Colonic mucosa (tissue), 4 donors: ENCODE measurements at regions of chr4 and their contacts with region 1.

Region 1: DNA sequence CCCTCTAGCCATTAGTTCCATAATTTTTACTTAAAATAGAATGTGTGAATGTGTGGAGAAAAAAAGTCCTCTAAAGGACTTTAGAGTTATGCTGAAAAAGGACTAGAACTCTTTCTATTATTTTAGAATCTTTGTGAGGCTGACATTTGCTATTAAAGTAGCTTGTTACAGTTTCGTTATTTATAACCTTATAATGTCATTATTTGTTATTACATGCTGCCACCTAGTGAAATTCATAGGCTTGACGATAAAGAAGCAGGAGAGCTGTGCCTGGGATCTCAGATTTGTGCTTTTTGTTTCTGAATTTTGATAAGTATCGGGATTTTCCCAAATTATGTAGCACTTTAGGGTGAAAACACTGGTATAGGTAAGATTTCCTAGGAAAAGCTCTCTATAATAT is 38.5 kb upstream of the TAPT1 start:
- DNase-seq: no peak
- H3K4me3 ChIP-seq: no peak overlapping the region
- H3K27ac ChIP-seq: no peak overlapping the region
- H3K4me1 ChIP-seq: no peaks in the 10 kb centered on the region
- H3K27me3 ChIP-seq: no peaks in the 10 kb centered on the region
- CTCF ChIP-seq: peak; percentile 27

Region 2: GRCh38 chr4:16026160-16026761 is 238.5 kb before region 1 on chr4:
- intact Hi-C with region 1: loop called (anchors 5 kb)
- DNase-seq: peak; percentile 50
- H3K4me3 ChIP-seq: no peak overlapping the region
- H3K27ac ChIP-seq: no peak overlapping the region
- H3K4me1 ChIP-seq: no peaks in the 10 kb centered on the region
- H3K27me3 ChIP-seq: no peaks in the 10 kb centered on the region
- CTCF ChIP-seq: peak; percentile 88

Region 3: GRCh38 chr4:16140520-16141249 is 124.1 kb before region 1 on chr4:
- intact Hi-C with region 1: no loop called
- DNase-seq: peak; percentile 89
- H3K4me3 ChIP-seq: no peak overlapping the region
- H3K27ac ChIP-seq: peak overlapping the region; percentile 68
- H3K4me1 ChIP-seq: peaks cover 11% of the 10 kb centered on the region
- H3K27me3 ChIP-seq: no peaks in the 10 kb centered on the region
- CTCF ChIP-seq: no peak

Region 4: GRCh38 chr4:16205298-16206164 is 59.3 kb before region 1 on chr4:
- intact Hi-C with region 1: loop called (anchors 10 kb)
- DNase-seq: no peak
- H3K4me3 ChIP-seq: no peak overlapping the region
- H3K27ac ChIP-seq: no peak overlapping the region
- H3K4me1 ChIP-seq: no peaks in the 10 kb centered on the region
- H3K27me3 ChIP-seq: no peaks in the 10 kb centered on the region
- CTCF ChIP-seq: peak; percentile 44